Activated CD4-positive, alpha-beta T cell treated with anti-CD3 and anti-CD28 coated beads, Interleukin-2, amount 10 ng/mL, durations not matched to agents 24 days and 14 days (primary cell): ENCODE measurements at regions of chr3 and their contacts with region 1.

Region 1: DNA sequence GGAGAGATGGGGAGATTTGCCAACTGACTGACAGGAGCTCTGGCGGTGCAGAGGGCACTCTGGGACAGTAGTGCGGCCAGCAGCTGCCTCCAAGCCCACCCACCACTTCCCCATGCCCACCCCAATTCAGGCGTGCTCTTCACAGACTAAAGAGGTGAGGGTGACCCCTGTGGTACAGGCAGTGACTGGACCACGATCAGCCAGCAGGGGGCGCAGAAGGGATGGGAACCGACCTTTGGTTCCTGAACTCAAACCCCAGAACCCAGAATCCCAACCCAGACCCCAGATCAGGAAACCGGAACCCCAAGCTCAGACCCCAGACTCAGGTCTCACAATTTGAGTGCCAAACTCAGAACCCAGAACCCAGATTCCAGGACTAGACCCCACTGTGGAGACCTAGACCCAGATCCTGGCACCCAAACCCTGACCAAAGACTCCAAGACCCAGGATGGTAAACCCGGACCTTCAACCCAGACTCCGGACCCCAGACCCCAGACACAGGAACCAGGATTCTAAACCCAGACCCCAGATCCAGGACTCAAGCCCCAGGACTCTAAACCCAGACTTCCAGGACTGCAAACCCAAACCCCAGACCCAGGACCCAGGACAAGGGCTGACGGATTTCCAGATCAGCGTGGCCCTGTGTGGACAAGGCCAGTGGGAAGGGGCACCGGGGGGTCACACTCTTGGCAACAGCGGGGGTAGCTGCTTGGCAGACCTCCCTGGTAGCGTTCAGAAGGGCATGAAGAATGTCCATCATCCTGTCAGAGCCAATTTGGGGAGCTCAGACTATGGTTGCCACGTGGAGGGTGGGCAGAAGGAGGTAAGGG is 3.7 kb upstream of the MYL3 start:
- DNase-seq: peak; percentile 93
- H3K4me3 Mint-ChIP-seq: no peak overlapping the region
- H3K27ac Mint-ChIP-seq: no peak overlapping the region
- H3K4me1 Mint-ChIP-seq: no peaks in the 10 kb centered on the region
- H3K27me3 Mint-ChIP-seq: peaks cover 4% of the 10 kb centered on the region

Region 2: DNA sequence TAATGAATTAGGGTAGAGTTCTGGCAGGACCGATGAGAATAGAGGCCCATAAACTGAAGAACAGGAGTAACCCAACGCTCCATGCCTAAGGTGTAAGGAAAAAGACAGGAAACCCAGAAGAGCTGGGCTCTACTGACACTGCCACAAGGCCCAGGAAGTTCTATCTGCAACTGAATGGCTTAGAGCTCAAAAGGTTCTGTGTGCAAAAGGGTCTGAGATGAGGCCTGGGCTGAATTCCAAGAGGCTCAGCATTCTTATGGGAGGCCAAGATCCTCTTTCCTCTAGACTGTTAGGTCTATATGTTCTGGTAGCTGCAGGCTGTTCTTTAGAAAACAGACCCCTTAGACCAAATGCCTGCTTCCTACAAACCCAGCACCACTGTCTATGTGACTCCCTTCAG is 118.8 kb before region 1 on chr3:
- intact Hi-C with region 1: no loop called
- DNase-seq: peak; percentile 46
- H3K4me3 Mint-ChIP-seq: no peak overlapping the region
- H3K27ac Mint-ChIP-seq: no peak overlapping the region
- H3K4me1 Mint-ChIP-seq: peaks cover 3% of the 10 kb centered on the region
- H3K27me3 Mint-ChIP-seq: peaks cover 1% of the 10 kb centered on the region

Region 3: DNA sequence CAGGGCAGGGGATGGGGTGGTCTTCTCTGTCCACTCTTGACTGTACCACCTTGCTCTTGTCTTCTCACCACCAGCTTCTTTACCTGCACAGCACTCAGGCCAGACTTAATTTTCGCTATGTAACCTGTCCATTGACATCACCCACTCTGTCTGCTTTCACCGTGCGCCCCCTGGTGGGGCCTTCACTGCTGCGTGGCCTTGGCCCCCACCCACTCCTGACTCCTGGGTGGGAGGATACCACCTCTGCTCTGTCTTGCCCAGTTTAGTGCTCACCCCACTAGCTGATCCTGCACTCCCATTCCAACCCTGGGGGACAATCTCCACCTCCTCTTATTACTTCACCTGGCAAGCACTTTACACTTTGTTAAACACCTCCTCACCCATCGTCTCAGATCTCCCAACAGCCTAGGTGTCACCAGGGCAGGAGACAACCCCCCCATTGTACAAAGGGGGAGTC is 28.3 kb after region 1 on chr3:
- intact Hi-C with region 1: loop called (anchors 1 kb)
- DNase-seq: peak; percentile 93
- H3K4me3 Mint-ChIP-seq: no peak overlapping the region
- H3K27ac Mint-ChIP-seq: no peak overlapping the region
- H3K4me1 Mint-ChIP-seq: peaks cover 5% of the 10 kb centered on the region
- H3K27me3 Mint-ChIP-seq: peaks cover 64% of the 10 kb centered on the region

Region 4: GRCh38 chr3:46909535-46910442 is 42.9 kb after region 1 on chr3:
- intact Hi-C with region 1: loop called (anchors 1 kb)
- DNase-seq: peak; percentile 91
- H3K4me3 Mint-ChIP-seq: no peak overlapping the region
- H3K27ac Mint-ChIP-seq: no peak overlapping the region
- H3K4me1 Mint-ChIP-seq: peaks cover 14% of the 10 kb centered on the region
- H3K27me3 Mint-ChIP-seq: no peaks in the 10 kb centered on the region

Region 5: GRCh38 chr3:46998121-46998851 is 131.4 kb after region 1 on chr3:
- intact Hi-C with region 1: loop called (anchors 5 kb)
- DNase-seq: peak; percentile 91
- H3K4me3 Mint-ChIP-seq: no peak overlapping the region
- H3K27ac Mint-ChIP-seq: peak overlapping the region; percentile 45
- H3K4me1 Mint-ChIP-seq: peaks cover 10% of the 10 kb centered on the region
- H3K27me3 Mint-ChIP-seq: no peaks in the 10 kb centered on the region

Region 6: GRCh38 chr3:47370887-47371697 is 504.2 kb after region 1 on chr3:
- intact Hi-C with region 1: loop called (anchors 5 kb)
- DNase-seq: peak; percentile 76
- H3K4me3 Mint-ChIP-seq: no peak overlapping the region
- H3K27ac Mint-ChIP-seq: no peak overlapping the region
- H3K4me1 Mint-ChIP-seq: peaks cover 2% of the 10 kb centered on the region
- H3K27me3 Mint-ChIP-seq: no peaks in the 10 kb centered on the region